Left cardiac atrium (tissue), 4 donors: ENCODE measurements at regions of chr15 and their contacts with region 1.

Region 1: GRCh38 chr15:34795267-34796081 is at the start of gene ACTC1:
- DNase-seq: peak; percentile 69
- ATAC-seq: peak; percentile 51 to 64
- total RNA-seq, gene ACTC1: 12,863 to 14,182 TPM

Region 2: GRCh38 chr15:34621675-34622074 is 173.8 kb before region 1 on chr15:
- intact Hi-C with region 1: no loop called
- DNase-seq: no peak
- ATAC-seq: no peak

Region 3: GRCh38 chr15:34693053-34693744 is 102.3 kb before region 1 on chr15:
- intact Hi-C with region 1: no loop called
- DNase-seq: no peak
- ATAC-seq: no peak

Region 4: GRCh38 chr15:34718681-34719641 is 76.5 kb before region 1 on chr15:
- intact Hi-C with region 1: loop called in 1 of 2 experiments (anchors 5 kb)
- DNase-seq: no peak
- ATAC-seq: no peak

Region 5: GRCh38 chr15:34987985-34988873 is 192.8 kb after region 1 on chr15 and contains the start of gene ZNF770:
- intact Hi-C with region 1: no loop called
- DNase-seq: peak; percentile 78
- ATAC-seq: peak; percentile 93 to 94
- total RNA-seq, gene ZNF770: 33.7 to 35.8 TPM